ENCODE measurements at regions of chr16 and their contacts with region 1.

Region 1: GRCh38 chr16:21656795-21657768 is 4.7 kb upstream of the IGSF6 start:
- DNase-seq: peak in 22 of 35 experiments; percentile 13 to 83 (median 34)
- ATAC-seq: peak; percentile 40 to 64 (median 42)
- H3K4me3 ChIP-seq: no peak overlapping the region
- H3K4me3 Mint-ChIP-seq: no peak overlapping the region
- H3K27ac ChIP-seq: peak overlapping the region; percentile 18
- H3K27ac Mint-ChIP-seq: peak overlapping the region; percentile 82 to 83
- H3K4me1 ChIP-seq: peaks cover 13 to 14% of the 10 kb centered on the region in 2 experiments
- H3K4me1 Mint-ChIP-seq: peaks cover 34 to 60% (median 45%) of the 10 kb centered on the region in 3 donors
- H3K27me3 ChIP-seq: no peaks in the 10 kb centered on the region
- H3K27me3 Mint-ChIP-seq: no peaks in the 10 kb centered on the region

Region 2: DNA sequence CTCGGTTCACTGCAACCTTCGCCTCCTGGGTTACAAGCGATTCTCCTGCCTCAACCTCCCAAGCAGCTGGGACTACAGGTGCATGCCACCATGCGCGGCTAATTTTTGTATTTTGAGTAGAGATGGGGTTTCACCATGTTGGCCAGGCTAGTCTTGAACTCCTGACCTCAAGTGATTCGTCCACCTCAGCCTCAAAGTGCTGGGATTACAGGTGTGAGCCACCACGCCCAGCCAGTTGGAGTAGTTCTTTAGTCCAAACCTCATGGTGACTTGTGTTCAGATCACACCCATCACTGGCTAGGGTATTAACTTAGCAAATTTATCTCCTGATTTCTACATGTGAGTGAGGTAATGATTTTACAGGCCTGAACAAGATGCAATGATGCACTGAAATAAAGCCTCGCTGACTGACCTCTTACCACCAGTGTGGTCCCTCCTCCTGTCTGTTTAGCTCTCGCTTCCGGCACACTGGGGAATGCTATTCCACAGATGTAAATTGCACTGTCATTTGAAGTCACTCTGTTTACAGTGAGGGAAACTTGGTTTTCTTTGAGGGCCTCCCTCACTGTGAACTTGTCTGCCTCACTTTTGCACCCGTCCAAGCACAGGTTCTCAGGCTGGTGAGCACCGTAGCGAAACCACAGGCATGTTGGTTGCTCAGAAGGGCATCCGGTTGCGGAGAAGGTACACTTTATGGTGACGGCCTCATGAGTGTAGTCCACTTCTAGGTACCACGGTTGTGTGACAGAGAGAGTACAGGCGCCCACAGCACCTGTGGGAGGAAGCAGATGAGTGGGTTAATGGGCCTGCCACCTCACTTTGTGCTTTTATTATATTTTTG is 10.1 kb before region 1 on chr16:
- CTCF ChIA-PET with region 1: interaction called, 9 to 26 read pairs
- POLR2A ChIA-PET with region 1: interaction called in 1 of 2 experiments, 3 read pairs
- DNase-seq: peak; percentile 50 to 83 (median 67)
- ATAC-seq: peak; percentile 82 to 90 (median 87)
- H3K4me3 ChIP-seq: peak overlapping the region; percentile 7 to 10
- H3K4me3 Mint-ChIP-seq: peak overlapping the region; percentile 54 to 69 (median 67)
- H3K27ac ChIP-seq: peak overlapping the region; percentile 88
- H3K27ac Mint-ChIP-seq: peak overlapping the region; percentile 96
- H3K4me1 ChIP-seq: peaks cover 33 to 58% of the 10 kb centered on the region in 2 experiments
- H3K4me1 Mint-ChIP-seq: peaks cover 52 to 63% (median 60%) of the 10 kb centered on the region in 3 donors
- H3K27me3 ChIP-seq: no peaks in the 10 kb centered on the region
- H3K27me3 Mint-ChIP-seq: no peaks in the 10 kb centered on the region

Region 3: DNA sequence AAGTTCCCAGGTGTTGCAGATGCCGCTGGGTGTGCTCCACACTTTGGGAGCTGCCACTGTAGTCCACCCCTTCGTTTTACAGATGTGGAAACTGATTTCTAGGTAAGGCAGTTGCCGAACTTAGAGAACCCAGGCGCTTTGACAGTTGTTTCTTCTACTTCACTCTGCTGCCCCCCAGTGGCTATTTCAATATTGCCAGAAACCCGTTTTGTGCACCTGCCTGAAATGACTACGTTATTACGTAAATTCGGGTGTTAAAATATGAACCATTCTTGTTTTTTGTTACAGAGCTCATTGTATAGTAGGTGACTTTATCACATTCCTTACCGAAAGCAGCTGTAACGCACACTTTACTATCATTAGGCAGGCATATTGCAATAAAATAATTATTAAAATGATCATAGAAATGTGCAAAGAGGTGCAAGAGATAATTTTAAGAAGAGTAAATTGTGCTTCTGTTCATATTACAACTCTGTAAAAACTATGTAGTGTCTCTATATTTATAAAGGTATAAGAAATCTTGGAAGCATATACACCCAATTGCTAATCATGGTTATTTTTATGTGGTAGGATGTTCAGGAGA is 51.5 kb after region 1 on chr16:
- CTCF ChIA-PET with region 1: interaction called, 10 to 34 read pairs
- POLR2A ChIA-PET with region 1: no interaction called
- DNase-seq: peak; percentile 51 to 88 (median 79)
- ATAC-seq: peak; percentile 69 to 77 (median 72)
- H3K4me3 ChIP-seq: no peak overlapping the region
- H3K4me3 Mint-ChIP-seq: no peak overlapping the region
- H3K27ac ChIP-seq: no peak overlapping the region
- H3K27ac Mint-ChIP-seq: no peak overlapping the region
- H3K4me1 ChIP-seq: peaks cover 0 to 4% of the 10 kb centered on the region in 2 experiments
- H3K4me1 Mint-ChIP-seq: peaks cover 0 to 4% (median 3%) of the 10 kb centered on the region in 3 donors
- H3K27me3 ChIP-seq: peaks cover 0 to 3% of the 10 kb centered on the region in 2 experiments
- H3K27me3 Mint-ChIP-seq: no peaks in the 10 kb centered on the region

Region 4: GRCh38 chr16:21959050-21959449 is 302.0 kb after region 1 on chr16:
- CTCF ChIA-PET with region 1: no interaction called
- POLR2A ChIA-PET with region 1: interaction called in 1 of 2 experiments, 10 read pairs
- DNase-seq: no peak
- ATAC-seq: no peak
- H3K4me3 ChIP-seq: no peak overlapping the region
- H3K4me3 Mint-ChIP-seq: no peak overlapping the region
- H3K27ac ChIP-seq: no peak overlapping the region
- H3K27ac Mint-ChIP-seq: no peak overlapping the region
- H3K4me1 ChIP-seq: peaks cover 7 to 10% of the 10 kb centered on the region in 2 experiments
- H3K4me1 Mint-ChIP-seq: peaks cover 21 to 36% (median 35%) of the 10 kb centered on the region in 3 donors
- H3K27me3 ChIP-seq: no peaks in the 10 kb centered on the region
- H3K27me3 Mint-ChIP-seq: no peaks in the 10 kb centered on the region

Region 5: GRCh38 chr16:22035153-22035552 is 378.1 kb after region 1 on chr16:
- CTCF ChIA-PET with region 1: no interaction called
- POLR2A ChIA-PET with region 1: no interaction called
- DNase-seq: no peak
- ATAC-seq: no peak
- H3K4me3 ChIP-seq: no peak overlapping the region
- H3K4me3 Mint-ChIP-seq: no peak overlapping the region
- H3K27ac ChIP-seq: no peak overlapping the region
- H3K27ac Mint-ChIP-seq: no peak overlapping the region
- H3K4me1 ChIP-seq: peaks cover 0 to 3% of the 10 kb centered on the region in 2 experiments
- H3K4me1 Mint-ChIP-seq: peaks cover 19 to 28% (median 21%) of the 10 kb centered on the region in 3 donors
- H3K27me3 ChIP-seq: no peaks in the 10 kb centered on the region
- H3K27me3 Mint-ChIP-seq: no peaks in the 10 kb centered on the region